HepG2 (cell line): ENCODE measurements at regions of chr20 and their contacts with region 1.

Region 1: DNA sequence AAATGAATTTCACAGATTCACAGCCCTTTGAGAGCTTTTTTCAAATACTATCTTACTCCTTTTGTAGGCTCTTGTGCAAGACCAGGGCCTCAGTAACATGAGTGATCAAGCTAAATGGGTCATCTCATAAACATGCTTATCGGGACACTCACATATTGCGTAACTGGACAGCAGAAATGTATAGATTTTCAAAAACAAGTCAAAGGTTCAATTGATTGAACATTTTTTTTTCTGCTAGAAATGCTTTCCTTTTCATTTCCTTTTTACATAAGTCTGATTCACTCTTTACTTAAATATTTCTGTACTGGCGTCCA is 8.7 kb upstream of the SALL4 start:
- DNase-seq: peak; percentile 90
- ATAC-seq: peak; percentile 61; the same call in 2 of the 3 replicates
- H3K4me3 ChIP-seq: no peak overlapping the region
- H3K27ac ChIP-seq: peak overlapping the region; percentile 4
- H3K4me1 ChIP-seq: peaks cover 57% of the 10 kb centered on the region
- H3K27me3 ChIP-seq: no peaks in the 10 kb centered on the region
- CTCF ChIP-seq: no peak
- EP300 ChIP-seq: peak; percentile 79 to 93; a peak in 3 of 4 replicates
- POLR2A ChIP-seq: no peak
- RAD21 ChIP-seq: no peak

Region 2: DNA sequence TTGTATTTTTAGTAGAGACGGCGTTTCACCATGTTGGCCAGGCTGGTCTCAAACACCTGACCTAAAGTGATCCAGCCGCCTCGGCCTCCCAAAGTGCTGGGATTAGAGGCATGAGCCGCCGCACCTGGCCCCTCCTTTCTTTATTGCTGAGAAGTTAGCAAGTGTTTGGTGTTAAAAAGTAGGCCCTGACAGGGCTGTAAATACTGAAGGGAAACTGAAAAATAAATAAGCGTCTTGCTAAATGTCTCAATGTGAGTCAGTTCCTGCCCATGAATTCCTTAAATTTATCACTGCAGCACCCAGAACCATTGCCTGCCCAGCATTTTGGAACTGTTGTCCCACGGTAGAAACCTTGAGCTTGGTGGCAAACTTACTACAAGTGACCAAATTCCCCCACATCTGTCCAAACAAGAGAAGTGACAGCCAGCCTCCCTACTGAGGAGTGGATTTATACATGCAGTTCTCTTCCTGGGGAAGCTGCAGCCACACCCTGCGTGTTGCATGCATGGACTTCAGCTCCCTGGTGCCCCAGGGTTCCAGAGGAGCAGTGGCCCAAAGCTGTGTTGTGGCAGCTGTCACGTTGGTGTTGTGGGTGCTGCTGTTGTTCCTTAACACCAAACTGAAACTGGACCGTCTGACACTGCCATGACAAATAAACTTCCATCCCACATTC is 68.2 kb before region 1 on chr20:
- CTCF ChIA-PET with region 1: no interaction called
- POLR2A ChIA-PET with region 1: no interaction called
- in situ Hi-C with region 1: no loop called
- intact Hi-C with region 1: no loop called
- DNase-seq: peak; percentile 74
- ATAC-seq: peak; percentile 65
- H3K4me3 ChIP-seq: peak overlapping the region in 2 of 3 experiments; percentile 32 to 52; a peak in 3 of 6 replicates
- H3K27ac ChIP-seq: peak overlapping the region; percentile 67
- H3K4me1 ChIP-seq: peaks cover 82% of the 10 kb centered on the region
- H3K27me3 ChIP-seq: no peaks in the 10 kb centered on the region
- CTCF ChIP-seq: peak; percentile 29; the same call in 1 of the 2 replicates
- EP300 ChIP-seq: peak in 1 of 2 experiments; percentile 42; a peak in 1 of 4 replicates
- POLR2A ChIP-seq: no peak
- RAD21 ChIP-seq: no peak

Region 3: GRCh38 chr20:51871867-51872304 is 60.9 kb after region 1 on chr20:
- CTCF ChIA-PET with region 1: no interaction called
- POLR2A ChIA-PET with region 1: no interaction called
- in situ Hi-C with region 1: no loop called
- intact Hi-C with region 1: no loop called
- DNase-seq: no peak
- ATAC-seq: no peak
- H3K4me3 ChIP-seq: no peak overlapping the region
- H3K27ac ChIP-seq: no peak overlapping the region
- H3K4me1 ChIP-seq: no peaks in the 10 kb centered on the region
- H3K27me3 ChIP-seq: peaks cover 0 to 2% of the 10 kb centered on the region in 2 experiments; a peak in 2 of 5 replicates
- CTCF ChIP-seq: no peak
- EP300 ChIP-seq: no peak
- POLR2A ChIP-seq: no peak
- RAD21 ChIP-seq: no peak

Region 4: DNA sequence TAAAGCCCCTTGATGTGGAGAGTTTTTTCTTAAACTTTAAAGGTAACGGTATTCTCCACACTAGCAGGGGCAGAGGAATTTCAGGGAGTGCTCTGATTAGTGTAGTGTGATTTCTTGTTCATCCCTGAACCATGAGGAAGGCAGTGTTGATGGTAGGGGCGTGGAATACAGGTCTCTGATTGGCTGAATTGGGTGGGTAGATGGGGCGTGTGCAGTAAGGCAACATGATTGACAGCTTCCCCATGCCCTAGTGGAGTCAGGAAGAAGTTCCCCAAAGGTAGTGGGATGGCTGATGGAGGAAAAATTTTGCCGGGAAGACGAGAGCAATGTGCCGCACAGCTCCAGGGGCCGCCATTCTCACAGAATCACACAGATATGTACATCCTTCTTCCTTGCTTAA is 88.7 kb after region 1 on chr20:
- CTCF ChIA-PET with region 1: no interaction called
- POLR2A ChIA-PET with region 1: no interaction called
- in situ Hi-C with region 1: no loop called
- intact Hi-C with region 1: loop called (anchors 10 kb)
- DNase-seq: peak; percentile 21
- ATAC-seq: peak; percentile 49
- H3K4me3 ChIP-seq: no peak overlapping the region
- H3K27ac ChIP-seq: no peak overlapping the region
- H3K4me1 ChIP-seq: no peaks in the 10 kb centered on the region; the same call in 1 of the 2 replicates
- H3K27me3 ChIP-seq: no peaks in the 10 kb centered on the region; a peak in 1 of 5 replicates
- CTCF ChIP-seq: no peak
- EP300 ChIP-seq: no peak
- POLR2A ChIP-seq: no peak
- RAD21 ChIP-seq: no peak